ENCODE measurements at regions of chr15 and their contacts with region 1.

Region 1: GRCh38 chr15:51380999-51381795 is 39.7 kb downstream of the GLDN start:
- DNase-seq: peak; percentile 45 to 49
- H3K4me3 ChIP-seq: no peak overlapping the region
- H3K27ac ChIP-seq: no peak overlapping the region
- H3K4me1 ChIP-seq: no peaks in the 10 kb centered on the region
- H3K27me3 ChIP-seq: no peaks in the 10 kb centered on the region; the same call in 1 of the 2 replicates
- CTCF ChIP-seq: peak; percentile 80

Region 2: DNA sequence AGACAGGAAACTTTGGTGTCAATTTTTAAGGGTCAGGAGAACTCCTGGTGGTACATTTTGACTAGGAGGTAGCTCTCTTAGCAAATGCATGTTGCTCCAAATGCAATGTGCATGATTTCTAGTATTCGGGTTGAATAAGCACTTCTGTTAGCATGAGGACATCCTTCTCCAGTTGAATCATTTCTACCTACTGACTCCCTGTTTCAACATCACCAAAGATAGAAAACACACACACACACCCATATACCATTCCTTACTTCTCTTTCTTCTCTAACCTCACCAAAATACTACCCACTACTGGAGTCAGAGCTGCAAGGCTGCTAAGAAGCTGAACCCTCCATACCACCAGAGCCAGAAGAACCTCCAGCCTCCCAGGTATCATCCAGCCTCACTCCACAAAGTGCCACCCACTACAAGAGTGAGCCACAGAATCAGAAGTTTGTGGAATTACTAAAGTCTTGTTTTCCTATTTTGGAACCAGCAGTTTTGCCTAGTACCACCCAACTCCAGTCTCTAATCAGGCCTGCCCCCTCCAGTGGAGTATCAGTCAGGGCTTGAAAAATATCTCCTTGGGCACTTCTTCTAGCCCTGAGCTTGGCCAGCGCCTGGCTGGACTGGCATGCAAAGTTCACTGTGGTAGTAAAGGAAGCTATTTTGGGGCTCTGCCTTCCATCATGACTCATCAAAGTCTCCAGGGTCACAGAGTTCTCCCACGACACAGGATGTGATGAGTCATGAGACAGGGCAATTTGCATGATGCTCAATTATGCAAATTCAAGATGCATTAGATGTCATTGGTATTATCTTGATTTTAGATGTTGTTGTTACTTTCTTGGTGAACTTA is 153.0 kb before region 1 on chr15:
- CTCF ChIA-PET with region 1: interaction called, 4 read pairs
- POLR2A ChIA-PET with region 1: no interaction called
- intact Hi-C with region 1: loop called (anchors 1 kb)
- DNase-seq: peak; percentile 27 to 53
- H3K4me3 ChIP-seq: no peak overlapping the region
- H3K27ac ChIP-seq: no peak overlapping the region
- H3K4me1 ChIP-seq: peaks cover 6% of the 10 kb centered on the region
- H3K27me3 ChIP-seq: no peaks in the 10 kb centered on the region
- CTCF ChIP-seq: no peak

Region 3: GRCh38 chr15:51281368-51281967 is 99.7 kb before region 1 on chr15:
- CTCF ChIA-PET with region 1: no interaction called
- POLR2A ChIA-PET with region 1: no interaction called
- intact Hi-C with region 1: loop called (anchors 1 kb)
- DNase-seq: peak in 1 of 2 experiments; percentile 26
- H3K4me3 ChIP-seq: no peak overlapping the region
- H3K27ac ChIP-seq: no peak overlapping the region
- H3K4me1 ChIP-seq: no peaks in the 10 kb centered on the region
- H3K27me3 ChIP-seq: peaks cover 12% of the 10 kb centered on the region; the same call in 1 of the 2 replicates
- CTCF ChIP-seq: peak; percentile 58; the same call in 1 of the 2 replicates

Region 4: DNA sequence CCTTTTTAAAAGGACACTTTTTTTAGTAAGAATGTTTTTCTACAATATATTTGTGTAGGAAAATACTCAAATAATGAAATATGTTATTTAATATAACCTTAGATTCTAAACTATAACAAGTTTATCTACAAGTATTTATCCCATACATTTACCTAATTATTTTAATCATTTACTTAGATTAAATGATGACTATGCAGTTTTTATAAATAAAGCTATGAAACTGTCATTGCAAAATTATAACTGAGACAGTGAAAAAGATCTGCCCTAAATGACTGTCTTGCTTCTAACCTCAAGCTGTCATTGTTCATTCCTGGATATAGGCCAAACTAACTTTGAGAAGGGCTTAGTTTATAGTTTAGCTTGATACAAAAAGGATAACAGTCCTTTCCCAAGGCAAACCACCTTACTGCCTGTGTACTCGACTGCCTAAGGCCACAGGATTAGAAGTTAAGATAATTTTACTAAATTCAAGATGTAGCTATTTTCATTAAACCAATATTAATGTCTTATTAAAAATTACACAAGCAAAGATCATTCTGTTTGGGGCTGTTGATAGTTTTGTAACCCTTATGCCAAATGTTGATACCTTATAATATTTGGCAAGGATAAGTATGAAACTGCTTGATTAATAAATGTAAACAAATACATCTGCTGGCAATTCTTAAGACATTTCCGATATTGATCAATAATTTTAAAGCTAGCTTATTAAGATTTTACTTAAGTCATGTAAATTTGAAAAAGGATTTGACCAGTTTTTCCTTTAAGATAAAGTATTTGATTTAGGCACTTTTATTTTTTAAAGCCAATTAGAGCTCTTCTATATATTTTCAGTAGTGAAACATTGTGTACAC is 44.5 kb after region 1 on chr15:
- CTCF ChIA-PET with region 1: no interaction called
- POLR2A ChIA-PET with region 1: no interaction called
- intact Hi-C with region 1: no loop called
- DNase-seq: no peak
- H3K4me3 ChIP-seq: no peak overlapping the region
- H3K27ac ChIP-seq: no peak overlapping the region
- H3K4me1 ChIP-seq: no peaks in the 10 kb centered on the region
- H3K27me3 ChIP-seq: no peaks in the 10 kb centered on the region
- CTCF ChIP-seq: no peak

Region 5: DNA sequence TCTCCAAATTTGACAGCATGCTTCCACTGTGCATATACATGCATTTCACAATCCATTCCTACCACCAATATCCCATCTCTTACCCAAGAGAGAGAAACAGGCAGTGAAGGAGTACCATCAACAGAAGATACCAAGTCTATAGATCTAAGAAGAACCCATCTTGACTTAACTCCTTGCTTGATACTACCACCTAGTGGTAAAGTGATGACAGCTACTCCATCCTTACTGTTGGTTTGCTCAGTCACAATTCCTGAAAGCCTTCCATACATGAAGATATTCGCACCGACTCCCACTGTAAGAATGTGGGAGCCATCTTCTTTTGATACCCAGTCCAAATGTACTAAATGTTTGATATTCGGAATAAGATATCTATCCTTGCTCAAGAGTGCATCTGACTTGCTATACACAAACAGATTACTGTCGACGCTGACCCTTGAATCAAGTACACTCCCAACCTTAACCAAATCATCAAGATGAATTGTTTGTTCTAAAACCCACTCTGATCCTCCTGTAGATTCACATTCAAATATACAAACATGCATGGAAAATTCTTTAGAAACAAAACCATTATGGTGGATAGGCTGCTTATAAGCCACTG is 118.3 kb after region 1 on chr15:
- CTCF ChIA-PET with region 1: interaction called, 4 read pairs
- POLR2A ChIA-PET with region 1: no interaction called
- intact Hi-C with region 1: loop called (anchors 2 kb)
- DNase-seq: no peak
- H3K4me3 ChIP-seq: no peak overlapping the region
- H3K27ac ChIP-seq: no peak overlapping the region
- H3K4me1 ChIP-seq: no peaks in the 10 kb centered on the region
- H3K27me3 ChIP-seq: no peaks in the 10 kb centered on the region
- CTCF ChIP-seq: peak; percentile 64